OCI-LY7 (cell line): ENCODE measurements at regions of chr10 and their contacts with region 1.

Region 1: GRCh38 chr10:11993834-11994468 is 48.7 kb downstream of the UPF2 start:
- DNase-seq: peak; percentile 88
- H3K4me3 ChIP-seq: peak overlapping the region; percentile 29
- H3K27ac ChIP-seq: peak overlapping the region; percentile 95
- H3K4me1 ChIP-seq: peaks cover 65% of the 10 kb centered on the region
- CTCF ChIP-seq: no peak

Region 2: GRCh38 chr10:12010353-12010752 is 16.4 kb after region 1 on chr10:
- CTCF ChIA-PET with region 1: no interaction called
- POLR2A ChIA-PET with region 1: interaction called, 10 read pairs
- intact Hi-C with region 1: no loop called
- DNase-seq: no peak
- H3K4me3 ChIP-seq: no peak overlapping the region
- H3K27ac ChIP-seq: no peak overlapping the region
- H3K4me1 ChIP-seq: no peaks in the 10 kb centered on the region
- CTCF ChIP-seq: no peak

Region 3: DNA sequence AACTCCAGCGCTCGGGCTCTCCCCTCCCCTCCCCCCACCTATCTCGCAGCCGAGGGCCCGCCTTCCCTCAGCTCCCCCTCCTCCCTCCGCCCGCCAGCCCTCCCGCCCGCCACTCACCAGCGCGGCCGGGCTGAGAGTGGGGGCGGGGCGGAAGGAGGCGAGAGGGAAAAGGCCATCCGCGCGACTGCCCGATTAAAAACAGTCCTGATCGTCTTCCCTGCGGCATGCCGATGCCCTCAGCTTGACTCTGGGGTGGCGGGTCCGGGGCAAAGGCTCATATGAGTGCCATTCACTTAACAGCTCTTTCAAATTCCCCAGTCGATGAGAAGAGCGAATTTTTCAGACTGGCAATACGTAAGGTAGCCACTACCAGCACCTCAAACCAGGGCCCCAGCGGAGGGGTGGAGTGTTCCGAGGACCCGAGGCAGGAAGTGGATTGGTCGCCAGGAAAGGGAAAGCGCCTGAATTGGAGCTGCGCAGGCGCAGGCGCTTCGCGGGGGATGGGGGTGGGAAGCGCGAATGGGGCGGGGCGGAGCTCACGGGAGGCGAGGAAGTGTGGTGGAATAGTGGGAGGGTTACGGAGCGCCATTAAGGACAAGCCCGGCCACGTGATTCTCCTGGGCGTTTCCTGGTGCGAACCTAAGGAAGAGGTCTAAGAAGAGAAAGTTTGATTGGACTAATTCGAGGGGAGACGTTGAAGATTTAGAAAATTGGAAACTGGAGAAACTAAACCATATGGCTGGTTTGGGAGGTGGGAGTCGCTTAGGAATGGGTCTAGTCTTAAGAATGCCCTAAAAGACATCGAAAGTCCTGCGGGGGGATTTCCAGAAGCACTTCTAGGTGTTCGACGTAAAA is 49.1 kb after region 1 on chr10 and contains the start of gene UPF2:
- CTCF ChIA-PET with region 1: no interaction called
- POLR2A ChIA-PET with region 1: interaction called, 14 read pairs
- intact Hi-C with region 1: loop called (anchors 5 kb)
- DNase-seq: peak; percentile 99
- H3K4me3 ChIP-seq: peak within 1 kb of the TSS; percentile 99
- H3K27ac ChIP-seq: peak within 1 kb of the TSS; percentile 79
- H3K4me1 ChIP-seq: peaks cover 25% of the 10 kb centered on the region
- CTCF ChIP-seq: no peak
- total RNA-seq, gene UPF2: 24.8 and 28.0 TPM in 2 replicates

Region 4: GRCh38 chr10:12062754-12063482 is 69.0 kb after region 1 on chr10:
- CTCF ChIA-PET with region 1: no interaction called
- POLR2A ChIA-PET with region 1: interaction called, 10 read pairs
- intact Hi-C with region 1: loop called (anchors 2 kb)
- DNase-seq: peak; percentile 52
- H3K4me3 ChIP-seq: peak overlapping the region; percentile 44
- H3K27ac ChIP-seq: peak overlapping the region; percentile 42
- H3K4me1 ChIP-seq: peaks cover 21% of the 10 kb centered on the region
- CTCF ChIP-seq: no peak

Region 5: DNA sequence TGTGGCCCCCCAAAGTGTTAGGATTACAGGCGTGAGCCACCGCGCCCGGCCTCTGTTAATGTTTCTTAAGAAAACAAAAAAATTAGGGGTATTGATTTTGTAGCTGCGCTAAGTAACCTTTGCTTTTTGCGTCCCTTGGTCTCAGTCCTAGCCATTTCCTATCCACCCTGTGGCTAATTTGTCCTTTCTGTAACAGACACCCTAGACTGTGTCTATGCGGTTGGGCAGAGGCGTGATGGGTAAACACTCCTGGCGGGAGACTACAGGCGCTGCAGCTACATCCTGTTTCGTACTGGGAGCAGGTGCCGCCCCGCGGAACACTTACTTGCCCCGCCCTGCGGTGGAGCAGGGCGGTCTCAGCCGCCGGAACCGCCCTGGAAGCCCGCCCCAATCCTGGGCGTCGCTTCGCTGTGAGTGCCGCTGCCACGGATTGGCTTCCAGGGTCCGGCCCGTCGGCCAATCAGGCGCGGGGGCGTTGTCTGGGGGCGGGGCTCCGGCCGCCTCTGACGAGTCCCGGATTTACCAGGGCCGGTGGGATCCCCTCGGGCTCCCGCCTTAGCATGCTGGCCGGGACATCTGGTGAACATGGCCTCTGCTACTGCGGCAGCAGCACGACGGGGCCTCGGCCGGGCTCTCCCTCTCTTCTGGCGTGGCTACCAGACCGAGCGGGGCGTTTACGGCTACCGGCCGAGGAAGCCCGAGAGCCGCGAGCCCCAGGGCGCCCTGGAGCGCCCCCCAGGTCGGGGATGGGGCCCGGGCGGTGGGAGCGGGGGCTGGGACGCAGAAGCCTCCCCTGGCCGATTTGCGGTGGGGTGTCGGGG is 74.7 kb after region 1 on chr10 and contains the start of gene DHTKD1:
- CTCF ChIA-PET with region 1: no interaction called
- POLR2A ChIA-PET with region 1: interaction called, 5 read pairs
- intact Hi-C with region 1: loop called (anchors 2 kb)
- DNase-seq: peak; percentile 99
- H3K4me3 ChIP-seq: peak within 1 kb of the TSS; percentile 86
- H3K27ac ChIP-seq: peak within 1 kb of the TSS; percentile 76
- H3K4me1 ChIP-seq: peaks cover 45% of the 10 kb centered on the region
- CTCF ChIP-seq: peak; percentile 50; the same call in 1 of the 2 replicates
- total RNA-seq, gene DHTKD1: 46.5 and 53.1 TPM in 2 replicates